Thyroid gland (tissue), 4 donors: ENCODE measurements at regions of chr19 and their contacts with region 1.

Region 1: DNA sequence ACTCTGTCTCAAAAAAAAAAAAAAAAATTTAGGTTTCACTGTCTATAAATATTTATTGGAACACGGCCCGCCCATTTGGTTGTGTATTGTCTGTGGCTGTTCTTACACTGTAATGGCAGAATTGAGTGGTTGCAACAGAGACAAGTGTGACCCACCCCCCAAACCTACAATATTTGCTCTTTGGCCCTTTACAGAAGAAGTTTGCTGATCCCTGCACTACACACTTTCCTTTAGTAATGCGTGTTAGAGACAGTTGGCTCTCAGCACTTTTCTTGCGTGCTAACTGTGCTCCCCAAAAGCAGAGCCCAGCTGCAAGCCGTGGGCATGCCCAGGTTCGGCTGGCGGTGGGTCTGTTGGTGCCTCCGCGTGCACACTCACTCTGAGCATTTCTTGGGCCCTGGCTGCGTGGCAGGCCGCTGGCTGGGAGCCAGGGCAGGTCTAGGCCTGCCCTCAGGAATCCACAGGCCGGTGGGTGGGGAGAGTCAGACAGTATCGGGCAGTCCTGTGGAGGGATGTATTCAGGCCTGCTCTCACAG is 72.6 kb downstream of the SIPA1L3 start:
- DNase-seq: peak; percentile 84 to 86
- H3K4me3 ChIP-seq: no peak overlapping the region
- H3K27ac ChIP-seq: peak overlapping the region; percentile 81 to 82 (median 82)
- H3K4me1 ChIP-seq: peaks cover 56 to 59% of the 10 kb centered on the region in 2 donors
- H3K27me3 ChIP-seq: no peaks in the 10 kb centered on the region
- CTCF ChIP-seq: peak in 1 of 6 experiments; percentile 6
- POLR2A ChIP-seq: peak in 1 of 2 donors; percentile 25

Region 2: DNA sequence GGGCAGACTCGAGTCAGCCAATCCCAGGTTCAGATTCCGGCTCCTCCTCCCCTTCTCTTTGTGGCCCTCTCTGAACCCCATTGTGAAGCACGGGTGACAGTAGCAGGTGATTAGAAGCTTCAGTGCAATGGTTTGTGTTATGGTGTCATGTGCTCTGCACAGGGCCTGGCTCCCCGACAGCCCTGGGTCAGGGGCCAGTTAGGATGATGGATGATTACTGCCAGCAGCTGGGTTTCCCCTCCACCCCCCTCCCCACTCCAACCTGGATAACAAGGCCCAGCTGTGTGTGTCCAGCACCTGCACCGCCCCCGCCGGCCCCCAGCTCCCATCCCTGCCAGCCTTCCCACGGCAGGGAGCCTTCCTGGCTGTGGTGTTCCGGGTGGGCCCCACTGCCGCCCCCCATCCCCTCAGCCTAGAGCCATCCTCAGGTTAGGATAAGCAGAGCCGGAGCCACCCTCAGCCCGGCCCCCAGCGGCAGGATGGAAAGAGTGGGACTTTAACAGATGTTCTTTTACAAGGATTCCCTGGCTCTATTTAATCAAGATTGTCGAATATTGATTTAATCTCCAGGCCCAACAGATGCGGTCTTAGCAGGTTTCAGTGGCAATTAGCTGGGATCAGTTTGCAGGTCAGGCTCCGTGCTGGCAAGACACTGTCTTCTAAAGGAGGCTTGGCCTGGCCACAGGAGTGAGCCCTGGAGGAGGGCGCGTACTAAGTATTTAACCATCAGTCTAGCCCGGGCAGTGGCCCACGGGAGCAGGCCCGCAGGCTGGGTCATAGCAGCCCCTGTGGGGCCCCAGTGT is 83.5 kb after region 1 on chr19:
- intact Hi-C with region 1: loop called (anchors 10 kb)
- DNase-seq: peak; percentile 39 to 65
- H3K4me3 ChIP-seq: no peak overlapping the region
- H3K27ac ChIP-seq: peak overlapping the region; percentile 88 to 95 (median 93)
- H3K4me1 ChIP-seq: peaks cover 42 to 68% of the 10 kb centered on the region in 2 donors
- H3K27me3 ChIP-seq: no peaks in the 10 kb centered on the region
- CTCF ChIP-seq: no peak
- POLR2A ChIP-seq: no peak